Right ventricle myocardium superior (tissue), 1 donor: ENCODE measurements at regions of chr4 and their contacts with region 1.

Region 1: GRCh38 chr4:31272331-31273061 is 552.3 kb downstream of the PCDH7 start:
- DNase-seq: no peak
- ATAC-seq: no peak

Region 2: DNA sequence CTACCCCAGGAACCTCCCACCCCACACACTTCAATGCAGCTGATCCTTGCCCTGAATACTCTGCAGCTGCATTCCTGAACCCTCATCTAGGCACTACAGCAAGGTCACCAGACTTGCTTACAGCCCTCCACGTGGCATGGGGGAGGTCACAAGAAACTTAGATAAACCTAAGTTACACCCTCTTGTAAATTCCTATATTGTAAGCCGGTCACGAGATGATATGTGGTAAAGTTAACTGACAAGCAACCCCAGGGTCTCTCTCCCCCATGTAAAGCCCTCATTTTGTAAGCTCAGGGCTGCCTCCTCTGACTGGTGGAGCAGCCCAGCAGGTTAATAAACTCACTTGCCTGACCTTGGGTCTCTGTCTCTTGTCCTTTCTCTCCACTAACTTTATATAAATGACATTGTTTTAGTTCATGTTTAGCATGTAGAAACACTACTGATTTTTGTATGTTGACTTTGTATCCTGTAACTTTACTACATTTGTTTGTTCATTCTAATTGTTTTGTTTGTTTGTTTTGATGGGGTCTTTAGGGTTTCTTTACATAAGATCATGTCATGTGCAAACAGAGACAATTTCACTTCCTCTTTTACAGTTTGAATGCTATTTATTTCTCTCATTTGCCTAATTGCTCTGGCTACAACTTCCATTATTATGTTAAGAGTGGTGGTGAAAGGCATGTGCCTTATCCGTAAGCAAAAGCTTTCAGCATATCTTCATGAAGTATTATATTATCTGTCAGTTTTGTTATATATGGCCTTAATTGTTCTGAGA is 18.5 kb after region 1 on chr4:
- intact Hi-C with region 1: loop called (anchors 2 kb)
- DNase-seq: no peak
- ATAC-seq: no peak